Stomach (tissue), 19 donors: ENCODE measurements at regions of chr15 and their contacts with region 1.

Region 1: GRCh38 chr15:68875377-68876116 is 54.8 kb upstream of the SPESP1 start:
- DNase-seq: peak; percentile 95 to 96
- H3K4me3 ChIP-seq: peak overlapping the region; percentile 31 to 40 (median 37)
- H3K27ac ChIP-seq: no peak overlapping the region
- H3K4me1 ChIP-seq: peaks cover 0 to 12% (median 7%) of the 10 kb centered on the region in 4 donors
- H3K27me3 ChIP-seq: peaks cover 0 to 10% (median 0%) of the 10 kb centered on the region in 3 donors
- CTCF ChIP-seq: peak in 6 of 7 experiments; percentile 79 to 96 (median 86)
- EP300 ChIP-seq: no peak
- POLR2A ChIP-seq: peak in 1 of 4 donors; percentile 9

Region 2: DNA sequence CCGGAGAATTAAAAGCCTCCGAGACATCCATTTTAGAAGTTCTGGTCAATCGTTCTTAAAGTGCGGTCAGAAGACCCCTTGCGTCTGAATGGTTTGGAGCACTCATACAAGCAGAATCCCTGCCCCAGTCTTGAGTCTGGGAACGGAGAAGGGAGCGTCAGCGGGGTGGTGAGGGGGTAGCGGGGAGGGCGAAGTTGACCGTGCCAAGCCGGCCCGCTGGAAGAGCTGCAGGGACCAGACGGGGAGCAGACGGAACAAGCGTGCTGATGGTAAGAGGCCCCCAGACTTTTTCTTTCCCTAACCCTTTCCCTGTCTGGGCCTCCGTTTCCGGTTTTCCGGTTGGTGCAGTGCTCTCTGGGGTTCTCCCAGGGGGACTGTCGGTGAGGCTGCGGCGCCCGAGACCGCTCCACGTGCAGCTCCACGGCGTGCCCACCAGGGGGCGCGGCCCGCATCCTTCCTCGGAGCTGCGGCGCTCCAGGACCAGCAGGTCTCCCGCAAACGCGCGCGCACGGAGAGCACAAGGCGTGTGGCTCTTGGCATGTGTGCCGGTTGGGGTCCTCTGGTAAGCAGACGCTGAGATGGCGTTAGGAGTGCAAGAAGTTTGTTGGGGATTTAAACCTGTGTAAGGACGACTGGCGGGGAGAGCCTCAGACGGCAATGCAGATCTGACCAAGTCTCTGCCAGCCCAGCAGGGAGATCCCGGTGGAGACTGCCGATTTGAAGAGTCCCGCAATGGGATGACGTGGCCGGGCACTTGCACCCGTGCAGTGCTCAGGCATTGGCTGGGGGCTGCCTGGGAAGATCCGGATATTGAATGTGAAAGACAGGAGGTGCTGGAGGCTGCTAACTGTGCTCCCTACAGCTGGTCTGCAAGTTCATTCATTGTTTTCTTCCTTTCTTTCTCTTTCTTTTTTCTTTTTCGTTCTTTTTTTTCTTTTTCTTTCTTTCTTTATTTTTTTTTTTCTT is 315.9 kb before region 1 on chr15:
- intact Hi-C with region 1: loop called (anchors 5 kb)
- DNase-seq: peak; percentile 80 to 95
- H3K4me3 ChIP-seq: peak overlapping the region; percentile 35 to 47 (median 43)
- H3K27ac ChIP-seq: no peak overlapping the region
- H3K4me1 ChIP-seq: peaks cover 11 to 17% (median 14%) of the 10 kb centered on the region in 4 donors
- H3K27me3 ChIP-seq: peaks cover 0 to 52% (median 30%) of the 10 kb centered on the region in 3 donors
- CTCF ChIP-seq: peak in 6 of 7 experiments; percentile 44 to 98 (median 94)
- EP300 ChIP-seq: no peak
- POLR2A ChIP-seq: no peak

Region 3: DNA sequence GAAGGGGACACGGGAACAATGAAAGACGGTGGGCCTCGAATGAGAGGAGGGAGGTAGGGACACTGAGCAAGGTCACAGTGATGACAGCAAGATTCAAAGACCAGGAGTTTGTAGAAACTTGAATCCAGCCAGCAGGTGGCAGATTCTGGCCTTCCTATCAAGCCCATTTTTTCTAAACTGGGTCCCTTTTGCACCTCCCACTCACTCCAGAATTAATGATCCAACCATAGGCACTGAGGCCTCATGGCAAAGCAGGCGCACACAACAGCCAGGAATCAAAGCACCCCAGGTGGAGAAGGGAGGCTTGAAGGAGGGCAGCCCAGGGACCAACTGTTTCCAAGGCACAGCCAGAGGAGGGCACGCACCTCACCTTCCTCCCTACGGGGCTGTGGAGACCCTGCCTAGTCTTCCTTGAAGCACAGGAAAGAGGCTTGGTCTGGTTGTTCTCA is 145.1 kb before region 1 on chr15:
- intact Hi-C with region 1: loop called (anchors 5 kb)
- DNase-seq: peak; percentile 49 to 78
- H3K4me3 ChIP-seq: no peak overlapping the region
- H3K27ac ChIP-seq: no peak overlapping the region
- H3K4me1 ChIP-seq: peaks cover 0 to 22% (median 9%) of the 10 kb centered on the region in 4 donors
- H3K27me3 ChIP-seq: no peaks in the 10 kb centered on the region
- CTCF ChIP-seq: peak in 5 of 7 experiments; percentile 27 to 62 (median 36)
- EP300 ChIP-seq: no peak
- POLR2A ChIP-seq: no peak

Region 4: DNA sequence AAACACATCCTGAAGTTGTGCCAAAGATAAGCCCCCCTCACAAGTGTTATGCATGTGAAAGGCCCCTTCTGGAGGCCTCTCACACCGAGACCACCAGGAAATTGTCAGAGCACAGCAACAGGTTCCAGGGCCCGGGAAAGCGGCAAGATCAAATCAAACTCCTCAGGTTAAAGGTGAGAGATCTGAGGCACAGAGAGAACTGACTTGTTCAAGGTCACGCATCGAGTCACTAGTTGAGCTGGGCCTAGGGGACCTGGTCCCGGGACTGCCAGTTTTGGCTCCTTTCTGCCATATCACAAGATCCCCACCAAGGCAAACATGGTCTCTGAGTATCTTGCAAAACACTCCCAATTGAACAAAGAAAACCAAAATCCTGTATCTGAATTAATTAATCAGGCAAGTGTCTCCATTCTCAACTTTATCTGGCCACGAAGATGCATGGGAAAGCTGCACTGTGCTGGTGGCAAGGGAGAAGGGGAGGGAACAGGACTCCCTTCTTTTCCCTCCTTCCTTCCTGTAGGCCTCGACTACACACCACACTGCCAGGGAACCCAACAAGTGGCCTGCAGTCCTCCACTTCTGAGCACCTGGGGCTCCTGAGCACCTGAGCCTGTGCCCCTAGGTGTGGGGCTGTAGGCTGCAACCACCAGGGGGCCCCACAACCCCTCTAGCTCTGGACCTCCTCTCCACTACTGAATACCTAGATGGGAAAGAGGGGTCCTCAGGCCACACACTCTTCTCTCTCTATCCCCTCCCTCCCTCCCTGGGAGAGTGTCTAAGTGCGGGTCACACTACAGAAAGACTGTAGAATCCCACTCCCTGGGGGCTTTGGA is 92.1 kb before region 1 on chr15:
- intact Hi-C with region 1: loop called (anchors 5 kb)
- DNase-seq: peak; percentile 77
- H3K4me3 ChIP-seq: no peak overlapping the region
- H3K27ac ChIP-seq: peak overlapping the region in 3 of 5 donors; percentile 0 to 61 (median 6)
- H3K4me1 ChIP-seq: peaks cover 32 to 58% (median 39%) of the 10 kb centered on the region in 4 donors
- H3K27me3 ChIP-seq: no peaks in the 10 kb centered on the region
- CTCF ChIP-seq: peak in 5 of 7 experiments; percentile 50 to 84 (median 62)
- EP300 ChIP-seq: no peak
- POLR2A ChIP-seq: no peak

Region 5: DNA sequence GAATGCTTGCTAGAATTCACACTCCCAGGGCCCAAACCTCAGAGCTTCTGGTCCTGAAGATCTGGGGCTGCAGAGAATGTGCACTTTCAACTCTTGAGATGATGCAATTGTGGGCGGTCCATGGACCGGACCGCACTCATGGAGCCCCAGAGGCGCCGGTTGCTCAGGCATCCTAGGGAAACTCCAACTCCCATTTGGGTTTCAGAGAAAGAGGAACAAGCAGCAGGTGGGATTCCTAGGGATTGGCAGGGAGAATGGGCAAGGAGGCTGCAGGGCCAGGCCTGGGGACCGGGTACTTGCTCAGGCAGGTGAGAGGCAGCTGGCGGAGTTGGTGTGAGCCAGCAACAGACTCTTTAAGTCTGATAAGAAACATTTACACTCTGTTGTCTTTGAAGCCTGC is 142.4 kb after region 1 on chr15:
- intact Hi-C with region 1: no loop called
- DNase-seq: no peak
- H3K4me3 ChIP-seq: no peak overlapping the region
- H3K27ac ChIP-seq: no peak overlapping the region
- H3K4me1 ChIP-seq: no peaks in the 10 kb centered on the region
- H3K27me3 ChIP-seq: peaks cover 0 to 5% (median 0%) of the 10 kb centered on the region in 3 donors
- CTCF ChIP-seq: no peak
- EP300 ChIP-seq: no peak
- POLR2A ChIP-seq: no peak

Region 6: DNA sequence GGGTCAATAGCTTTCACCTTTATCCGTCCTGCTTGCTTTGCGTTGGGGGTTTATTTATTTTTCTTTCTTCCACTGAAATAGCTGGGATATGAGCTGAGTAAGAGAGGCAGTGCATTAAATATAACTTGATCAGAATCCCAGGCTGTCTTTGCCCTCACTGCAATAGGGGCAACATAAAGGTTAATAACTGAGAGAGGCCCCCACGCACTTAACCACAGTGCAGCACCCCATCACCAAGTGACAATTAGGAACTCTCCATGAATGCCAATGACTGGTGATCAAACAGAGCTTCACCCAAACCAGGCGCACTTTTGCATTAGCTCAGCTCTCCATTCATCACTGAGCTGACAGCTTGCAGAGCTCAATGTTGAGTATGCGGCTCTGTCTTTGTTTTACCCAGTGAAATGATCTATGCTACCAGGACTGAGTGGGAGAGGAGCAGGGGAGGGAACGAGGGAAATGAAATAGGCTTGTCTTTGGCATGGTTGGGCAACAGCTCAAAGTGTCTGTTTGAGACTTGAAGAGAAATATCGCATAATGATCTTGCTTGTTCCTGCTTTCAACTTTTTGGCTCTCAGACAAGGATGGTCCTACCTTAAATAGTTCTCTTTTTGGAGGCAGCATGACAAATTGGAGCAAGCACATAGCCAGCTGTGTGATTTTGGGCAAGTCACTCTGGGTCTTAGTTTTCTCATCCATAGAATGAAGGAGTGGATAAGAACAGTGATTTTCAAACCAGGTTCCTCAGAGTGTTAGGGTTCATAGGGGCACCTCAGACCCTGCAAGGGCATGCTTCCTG is 270.3 kb after region 1 on chr15:
- intact Hi-C with region 1: no loop called
- DNase-seq: peak in 1 of 2 donors; percentile 71
- H3K4me3 ChIP-seq: no peak overlapping the region
- H3K27ac ChIP-seq: no peak overlapping the region
- H3K4me1 ChIP-seq: peaks cover 0 to 7% (median 0%) of the 10 kb centered on the region in 4 donors
- H3K27me3 ChIP-seq: peaks cover 0 to 44% (median 4%) of the 10 kb centered on the region in 3 donors
- CTCF ChIP-seq: no peak
- EP300 ChIP-seq: no peak
- POLR2A ChIP-seq: no peak